CD8-positive, alpha-beta T cell (primary cell): ENCODE measurements at regions of chr19 and their contacts with region 1.

Region 1: GRCh38 chr19:16382775-16383543 is 58.3 kb downstream of the KLF2 start:
- DNase-seq: peak; percentile 70 to 91 (median 84)
- ATAC-seq: peak; percentile 80
- H3K4me3 ChIP-seq: peak overlapping the region; percentile 40 to 42
- H3K4me3 Mint-ChIP-seq: peak overlapping the region; percentile 54
- H3K27ac ChIP-seq: peak overlapping the region; percentile 66 to 82
- H3K27ac Mint-ChIP-seq: peak overlapping the region; percentile 95
- H3K4me1 ChIP-seq: peaks cover 58% of the 10 kb centered on the region
- H3K4me1 Mint-ChIP-seq: peaks cover 58% of the 10 kb centered on the region
- H3K27me3 ChIP-seq: no peaks in the 10 kb centered on the region
- H3K27me3 Mint-ChIP-seq: no peaks in the 10 kb centered on the region
- CTCF ChIP-seq: peak; percentile 85

Region 2: DNA sequence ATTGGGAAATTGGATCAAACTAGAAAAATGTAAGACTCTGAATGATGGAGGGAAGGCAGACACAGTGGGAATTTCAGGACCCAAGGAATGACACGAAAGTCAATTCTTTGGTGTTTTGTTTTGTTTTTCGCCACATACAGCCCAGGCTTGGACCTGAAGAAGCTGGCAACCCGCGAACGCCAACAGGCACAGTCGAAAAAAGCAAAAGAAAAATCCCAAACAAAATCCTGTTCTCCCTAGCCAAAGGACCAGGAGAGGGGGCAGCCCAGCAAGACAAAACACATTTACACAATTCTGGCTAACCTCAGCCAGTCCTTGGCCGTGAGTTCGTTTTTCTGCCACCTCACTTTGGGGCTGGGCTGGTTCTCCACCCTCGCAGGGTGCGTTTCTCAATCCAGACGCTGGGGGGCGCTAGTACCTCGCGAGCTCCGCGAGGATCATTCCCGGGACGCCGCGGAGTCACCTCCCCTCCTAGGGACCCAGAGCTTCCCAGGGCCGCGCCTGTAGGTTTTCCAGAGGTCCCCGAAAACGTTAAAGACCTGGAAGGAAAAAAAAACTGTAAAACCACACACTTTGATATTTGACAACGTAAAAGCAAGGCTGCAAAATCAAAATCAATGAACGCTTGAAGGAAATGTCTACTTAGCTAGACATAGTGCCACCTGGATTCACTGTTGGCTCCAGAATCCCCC is 341.5 kb before region 1 on chr19:
- CTCF ChIA-PET with region 1: interaction called, 5 read pairs
- POLR2A ChIA-PET with region 1: no interaction called
- intact Hi-C with region 1: loop called in 1 of 2 experiments (anchors 5 kb)
- DNase-seq: peak; percentile 50 to 86 (median 76)
- ATAC-seq: peak; percentile 91
- H3K4me3 ChIP-seq: no peak overlapping the region
- H3K4me3 Mint-ChIP-seq: peak overlapping the region; percentile 11
- H3K27ac ChIP-seq: no peak overlapping the region
- H3K27ac Mint-ChIP-seq: no peak overlapping the region
- H3K4me1 ChIP-seq: peaks cover 8% of the 10 kb centered on the region
- H3K4me1 Mint-ChIP-seq: peaks cover 16% of the 10 kb centered on the region
- H3K27me3 ChIP-seq: no peaks in the 10 kb centered on the region
- H3K27me3 Mint-ChIP-seq: no peaks in the 10 kb centered on the region
- CTCF ChIP-seq: peak; percentile 96

Region 3: GRCh38 chr19:16247353-16248182 is 135.4 kb before region 1 on chr19:
- CTCF ChIA-PET with region 1: interaction called, 149 read pairs
- POLR2A ChIA-PET with region 1: interaction called, 38 read pairs
- intact Hi-C with region 1: loop called (anchors 1 kb)
- DNase-seq: peak; percentile 70 to 94 (median 84)
- ATAC-seq: peak; percentile 80
- H3K4me3 ChIP-seq: no peak overlapping the region
- H3K4me3 Mint-ChIP-seq: peak overlapping the region; percentile 60
- H3K27ac ChIP-seq: no peak overlapping the region
- H3K27ac Mint-ChIP-seq: peak overlapping the region; percentile 82
- H3K4me1 ChIP-seq: peaks cover 48% of the 10 kb centered on the region
- H3K4me1 Mint-ChIP-seq: peaks cover 32% of the 10 kb centered on the region
- H3K27me3 ChIP-seq: no peaks in the 10 kb centered on the region
- H3K27me3 Mint-ChIP-seq: no peaks in the 10 kb centered on the region
- CTCF ChIP-seq: peak; percentile 95

Region 4: GRCh38 chr19:16324384-16325160 is 58.4 kb before region 1 on chr19 and contains the start of gene KLF2:
- CTCF ChIA-PET with region 1: interaction called, 200 read pairs
- POLR2A ChIA-PET with region 1: interaction called, 2,627 read pairs
- intact Hi-C with region 1: loop called in 1 of 2 experiments (anchors 1 kb)
- DNase-seq: peak; percentile 92 to 98 (median 97)
- ATAC-seq: peak; percentile 58
- H3K4me3 ChIP-seq: peak within 1 kb of the TSS; percentile 87 to 100
- H3K4me3 Mint-ChIP-seq: peak within 1 kb of the TSS; percentile 77
- H3K27ac ChIP-seq: peak within 1 kb of the TSS; percentile 94 to 99
- H3K27ac Mint-ChIP-seq: peak within 1 kb of the TSS; percentile 82
- H3K4me1 ChIP-seq: peaks cover 36% of the 10 kb centered on the region
- H3K4me1 Mint-ChIP-seq: peaks cover 40% of the 10 kb centered on the region
- H3K27me3 ChIP-seq: no peaks in the 10 kb centered on the region
- H3K27me3 Mint-ChIP-seq: no peaks in the 10 kb centered on the region
- CTCF ChIP-seq: no peak
- total RNA-seq, gene KLF2: 817 to 847 TPM

Region 5: GRCh38 chr19:16355293-16356043 is 27.5 kb before region 1 on chr19:
- CTCF ChIA-PET with region 1: interaction called, 22 read pairs
- POLR2A ChIA-PET with region 1: interaction called, 7 read pairs
- intact Hi-C with region 1: no loop called
- DNase-seq: peak in 2 of 9 experiments; percentile 2 to 52
- ATAC-seq: peak; percentile 63
- H3K4me3 ChIP-seq: no peak overlapping the region
- H3K4me3 Mint-ChIP-seq: no peak overlapping the region
- H3K27ac ChIP-seq: no peak overlapping the region
- H3K27ac Mint-ChIP-seq: peak overlapping the region; percentile 62
- H3K4me1 ChIP-seq: peaks cover 56% of the 10 kb centered on the region
- H3K4me1 Mint-ChIP-seq: peaks cover 63% of the 10 kb centered on the region
- H3K27me3 ChIP-seq: no peaks in the 10 kb centered on the region
- H3K27me3 Mint-ChIP-seq: no peaks in the 10 kb centered on the region
- CTCF ChIP-seq: no peak

Region 6: DNA sequence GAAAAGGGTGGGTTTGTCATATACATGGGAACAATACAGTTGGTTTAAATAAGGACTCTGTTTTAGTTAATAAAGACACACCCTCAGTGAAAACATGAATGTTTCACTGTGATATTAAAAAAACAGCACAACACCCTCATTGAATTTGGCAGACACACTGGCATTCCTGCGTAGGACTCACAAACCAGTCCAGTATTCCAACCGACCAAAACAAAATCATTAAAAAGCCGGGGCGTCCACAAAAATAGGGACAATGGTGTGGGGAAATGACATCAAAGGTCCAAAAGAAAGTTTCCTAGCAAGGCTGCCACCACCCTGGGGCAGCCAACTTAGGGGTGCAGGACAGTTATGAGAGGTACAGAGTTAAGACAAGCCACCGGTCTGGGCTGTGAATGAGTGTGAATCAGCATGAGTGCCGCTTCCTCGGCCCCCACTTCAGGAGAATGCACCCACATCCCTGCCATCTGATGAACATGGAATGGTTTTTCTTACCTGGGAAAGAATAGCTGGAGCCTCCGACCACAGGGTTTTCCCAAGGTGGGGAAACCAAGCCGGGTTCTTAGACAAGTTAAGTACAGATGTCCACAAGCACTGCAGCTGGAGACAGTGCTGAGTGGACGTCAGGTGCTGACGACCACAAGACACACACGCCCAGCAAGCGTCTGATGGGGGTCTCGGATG is 15.0 kb after region 1 on chr19:
- CTCF ChIA-PET with region 1: interaction called, 12 read pairs
- POLR2A ChIA-PET with region 1: interaction called, 7 read pairs
- intact Hi-C with region 1: no loop called
- DNase-seq: no peak
- ATAC-seq: no peak
- H3K4me3 ChIP-seq: no peak overlapping the region
- H3K4me3 Mint-ChIP-seq: no peak overlapping the region
- H3K27ac ChIP-seq: no peak overlapping the region
- H3K27ac Mint-ChIP-seq: no peak overlapping the region
- H3K4me1 ChIP-seq: peaks cover 11% of the 10 kb centered on the region
- H3K4me1 Mint-ChIP-seq: peaks cover 10% of the 10 kb centered on the region
- H3K27me3 ChIP-seq: no peaks in the 10 kb centered on the region
- H3K27me3 Mint-ChIP-seq: no peaks in the 10 kb centered on the region
- CTCF ChIP-seq: no peak